Mammary epithelial cell (primary cell): ENCODE measurements at regions of chr10 and their contacts with region 1.

Region 1: GRCh38 chr10:102352066-102352715 is 43.3 kb upstream of the NFKB2 start:
- DNase-seq: peak; percentile 32
- H3K4me3 ChIP-seq: no peak overlapping the region
- H3K27ac ChIP-seq: no peak overlapping the region
- H3K4me1 ChIP-seq: no peaks in the 10 kb centered on the region
- H3K27me3 ChIP-seq: no peaks in the 10 kb centered on the region
- CTCF ChIP-seq: peak; percentile 93 to 96

Region 2: DNA sequence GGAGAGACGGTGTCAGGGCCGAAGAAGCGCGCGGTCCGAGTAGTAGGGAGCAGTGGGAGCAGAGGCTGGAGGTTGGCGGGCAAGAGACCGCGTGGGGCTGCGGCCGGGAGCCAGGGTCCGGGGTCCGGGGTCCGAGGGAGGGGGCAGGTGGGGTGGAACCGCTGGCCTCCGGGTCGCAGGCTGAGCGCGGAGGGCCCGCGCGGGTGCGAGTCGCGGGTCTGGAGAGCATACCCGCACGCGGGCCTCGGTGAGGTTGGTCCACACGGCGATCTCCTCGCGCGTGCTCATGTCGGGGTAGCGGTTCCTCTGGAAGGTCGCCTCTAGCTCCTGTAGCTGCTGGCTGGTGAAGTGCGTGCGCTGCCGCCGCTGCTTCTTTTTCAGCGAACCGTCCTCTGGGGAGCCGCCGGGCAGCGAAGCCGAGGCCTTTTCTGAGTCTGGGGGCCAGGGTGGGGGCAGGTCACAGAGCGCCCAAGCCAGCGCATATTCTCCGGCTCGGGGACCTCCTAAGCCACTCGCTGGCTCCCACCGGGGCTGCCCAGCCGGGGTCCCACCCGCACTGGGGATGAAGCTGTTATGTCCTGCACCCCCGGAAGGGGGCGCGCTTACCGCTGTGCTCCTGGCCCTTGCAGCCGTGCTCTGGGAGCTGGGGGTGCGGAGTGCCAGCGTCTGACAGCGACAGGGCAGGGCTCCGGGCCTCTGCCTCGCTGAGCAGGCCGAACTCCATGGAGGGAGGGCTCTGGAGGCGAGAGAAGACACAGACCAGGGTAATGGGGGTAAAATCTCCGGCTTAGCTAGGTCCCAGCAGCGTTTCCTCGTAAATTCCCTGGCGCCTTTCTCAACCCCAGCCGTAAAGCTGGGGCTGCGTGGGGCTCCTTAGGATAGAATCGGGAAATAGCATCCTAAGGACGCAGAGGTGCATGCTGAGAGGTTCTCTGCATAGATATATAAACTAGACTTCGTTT is 120.6 kb before region 1 on chr10:
- CTCF ChIA-PET with region 1: interaction called, 23 read pairs
- dilution Hi-C with region 1: loop called (anchors 5 kb)
- in situ Hi-C with region 1: loop called (anchors 5 kb)
- intact Hi-C with region 1: loop called (anchors 1 kb)
- DNase-seq: no peak
- H3K4me3 ChIP-seq: peak overlapping the region; percentile 43 to 51 (median 48)
- H3K27ac ChIP-seq: no peak overlapping the region
- H3K4me1 ChIP-seq: peaks cover 31% of the 10 kb centered on the region
- H3K27me3 ChIP-seq: no peaks in the 10 kb centered on the region
- CTCF ChIP-seq: peak; percentile 86 to 93

Region 3: DNA sequence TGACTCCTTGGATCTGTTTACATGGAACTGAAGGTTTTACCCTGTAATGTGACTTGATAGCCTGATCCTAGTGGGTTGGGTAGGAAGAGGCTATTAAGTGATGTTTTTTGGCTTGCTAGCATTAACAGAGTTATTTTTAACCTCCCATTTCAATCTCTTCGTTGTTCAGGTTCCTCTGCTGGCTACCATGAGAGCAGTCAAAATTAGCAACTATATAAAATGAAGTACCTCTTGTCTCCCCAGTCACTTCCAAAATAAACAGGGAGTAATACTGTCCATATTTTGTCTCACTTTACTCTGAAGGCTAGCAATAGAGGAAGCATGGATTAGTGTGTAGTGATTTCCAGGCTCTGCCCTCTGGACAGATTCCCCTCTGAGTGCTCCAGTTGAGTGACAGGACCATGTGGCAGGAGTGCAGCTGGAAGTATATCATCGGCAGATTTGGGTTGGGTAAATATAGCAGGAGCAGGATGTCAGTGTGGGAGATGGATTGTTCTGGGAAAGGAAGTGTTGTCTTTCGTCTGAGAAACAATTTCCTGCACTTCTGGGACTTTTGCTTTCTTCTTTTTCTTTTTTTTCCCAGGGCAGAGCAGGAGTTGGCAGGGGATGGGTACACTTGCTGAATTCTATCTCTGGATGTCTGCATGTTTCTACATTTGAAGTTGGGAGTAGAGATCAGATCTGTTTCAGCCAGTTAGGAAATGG is 71.6 kb before region 1 on chr10:
- CTCF ChIA-PET with region 1: no interaction called
- dilution Hi-C with region 1: loop called (anchors 5 kb)
- in situ Hi-C with region 1: no loop called
- intact Hi-C with region 1: no loop called
- DNase-seq: no peak
- H3K4me3 ChIP-seq: peak overlapping the region in 1 of 3 experiments; percentile 18
- H3K27ac ChIP-seq: peak overlapping the region; percentile 6
- H3K4me1 ChIP-seq: peaks cover 43% of the 10 kb centered on the region
- H3K27me3 ChIP-seq: no peaks in the 10 kb centered on the region
- CTCF ChIP-seq: no peak

Region 4: GRCh38 chr10:102408728-102409603 is 56.8 kb after region 1 on chr10:
- CTCF ChIA-PET with region 1: no interaction called
- dilution Hi-C with region 1: no loop called
- in situ Hi-C with region 1: no loop called
- intact Hi-C with region 1: no loop called
- DNase-seq: no peak
- H3K4me3 ChIP-seq: peak overlapping the region in 2 of 3 experiments; percentile 27 to 34
- H3K27ac ChIP-seq: no peak overlapping the region
- H3K4me1 ChIP-seq: peaks cover 2% of the 10 kb centered on the region
- H3K27me3 ChIP-seq: peaks cover 30% of the 10 kb centered on the region
- CTCF ChIP-seq: no peak